Prostate gland (tissue), 2 donors: ENCODE measurements at regions of chr18 and their contacts with region 1.

Region 1: DNA sequence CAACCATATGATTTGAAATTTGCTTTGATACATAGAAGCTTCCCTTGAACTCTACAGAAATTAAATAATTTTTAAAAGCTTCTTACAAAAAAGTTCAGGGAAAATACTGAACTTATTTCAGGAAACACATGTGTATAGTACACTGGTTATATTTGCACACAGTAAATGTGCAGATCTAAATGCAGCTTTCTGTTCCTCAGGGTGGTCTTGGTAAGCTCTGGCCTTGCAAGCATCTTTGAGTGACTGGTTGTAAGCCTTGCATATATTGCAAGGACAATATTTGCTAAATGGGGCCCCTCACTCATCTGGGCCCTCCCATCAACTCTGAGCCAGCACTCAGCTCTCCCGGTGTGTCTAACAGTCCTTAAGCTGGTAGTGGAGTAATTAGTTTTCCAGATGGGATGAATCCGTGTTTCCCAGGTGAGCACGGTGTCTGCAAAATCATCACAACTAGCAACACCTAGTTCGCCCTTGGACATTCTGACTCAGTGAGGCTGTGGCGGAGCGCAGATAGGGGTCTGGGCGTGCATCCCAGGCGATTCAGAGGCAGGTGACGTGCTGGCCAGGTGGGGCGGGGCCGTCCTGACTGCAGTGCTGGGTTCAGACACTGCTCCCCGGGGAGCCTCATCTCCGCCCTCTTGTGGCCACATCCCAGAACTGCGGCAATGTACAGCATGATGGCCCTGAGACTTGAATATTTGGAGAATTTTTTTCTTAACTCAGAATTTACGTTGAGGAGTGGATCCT is 149.6 kb downstream of the MBP start:
- DNase-seq: peak; percentile 83
- H3K4me3 ChIP-seq: no peak overlapping the region
- H3K27ac ChIP-seq: no peak overlapping the region
- H3K4me1 ChIP-seq: no peaks in the 10 kb centered on the region
- H3K27me3 ChIP-seq: no peaks in the 10 kb centered on the region
- CTCF ChIP-seq: peak; percentile 91 to 96 (median 94)
- POLR2A ChIP-seq: no peak

Region 2: DNA sequence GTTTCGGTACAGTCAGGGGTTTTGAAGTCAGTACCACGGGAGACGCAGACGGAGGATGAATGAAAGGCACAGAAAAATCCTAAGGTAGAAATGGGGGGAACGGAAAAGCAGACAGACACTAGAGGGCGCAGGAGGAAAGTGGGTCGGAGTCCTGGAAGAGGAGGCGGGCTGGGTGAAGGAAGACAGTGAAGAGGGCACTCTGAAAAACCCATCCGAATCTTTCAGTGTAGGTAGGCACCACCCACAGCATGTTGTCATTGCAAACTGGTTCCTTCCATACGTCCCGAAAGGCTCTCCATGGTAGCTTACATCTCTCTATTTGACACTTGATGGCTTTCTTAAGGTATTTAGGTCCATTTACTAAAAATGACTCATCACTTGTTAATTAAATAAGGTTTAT is 179.2 kb before region 1 on chr18:
- intact Hi-C with region 1: loop called (anchors 2 kb)
- DNase-seq: peak; percentile 54
- H3K4me3 ChIP-seq: no peak overlapping the region
- H3K27ac ChIP-seq: no peak overlapping the region
- H3K4me1 ChIP-seq: no peaks in the 10 kb centered on the region
- H3K27me3 ChIP-seq: no peaks in the 10 kb centered on the region
- CTCF ChIP-seq: peak; percentile 52 to 64 (median 56)
- POLR2A ChIP-seq: no peak

Region 3: DNA sequence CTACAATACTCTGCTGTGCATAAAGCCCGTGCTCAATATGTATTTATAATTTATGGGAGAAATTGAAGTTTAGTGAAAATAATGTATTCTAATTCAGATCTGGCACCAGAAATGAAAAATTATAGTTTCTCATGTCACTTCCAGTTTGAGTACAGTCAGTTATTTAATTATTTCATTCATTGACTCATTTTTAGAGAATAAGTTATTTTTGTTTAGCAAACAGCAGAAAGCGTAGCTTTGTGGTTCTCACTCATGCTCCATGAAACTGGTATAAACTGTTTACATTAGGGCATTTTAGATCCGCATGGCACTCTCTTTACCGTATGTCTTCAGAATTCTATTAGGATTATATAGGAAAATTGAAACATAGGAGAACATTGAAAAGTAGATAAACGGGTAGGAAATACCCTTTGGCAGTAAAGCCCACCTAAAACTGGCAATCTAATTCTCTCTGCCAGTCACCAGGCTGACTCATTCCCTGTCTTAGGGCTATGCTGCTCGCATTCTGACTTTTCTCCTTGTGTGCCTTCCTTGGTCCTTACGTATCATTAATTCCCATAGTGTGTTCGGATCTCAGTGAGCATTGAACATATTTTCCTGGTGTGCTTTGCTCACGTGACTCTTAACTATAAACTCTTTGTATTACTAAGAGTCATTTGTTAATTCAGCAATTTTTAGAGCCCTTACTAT is 54.7 kb before region 1 on chr18:
- intact Hi-C with region 1: loop called (anchors 5 kb)
- DNase-seq: no peak
- H3K4me3 ChIP-seq: no peak overlapping the region
- H3K27ac ChIP-seq: no peak overlapping the region
- H3K4me1 ChIP-seq: no peaks in the 10 kb centered on the region
- H3K27me3 ChIP-seq: no peaks in the 10 kb centered on the region
- CTCF ChIP-seq: no peak
- POLR2A ChIP-seq: no peak